Heart left ventricle (tissue), 16 donors: ENCODE measurements at regions of chr5 and their contacts with region 1.

Region 1: GRCh38 chr5:62773460-62773859 is 194.8 kb downstream of the LRRC70 start:
- DNase-seq: no peak
- ATAC-seq: no peak
- H3K4me3 ChIP-seq: no peak overlapping the region
- H3K27ac ChIP-seq: no peak overlapping the region
- H3K4me1 ChIP-seq: peaks cover 0 to under 1% (median 0%) of the 10 kb centered on the region in 12 donors
- H3K27me3 ChIP-seq: no peaks in the 10 kb centered on the region
- CTCF ChIP-seq: no peak
- POLR2A ChIP-seq: no peak

Region 2: GRCh38 chr5:62460578-62460983 is 312.9 kb before region 1 on chr5:
- intact Hi-C with region 1: loop called in 9 of 10 experiments (anchors 2 to 5 kb)
- DNase-seq: no peak
- ATAC-seq: peak in 1 of 4 donors; percentile 49
- H3K4me3 ChIP-seq: no peak overlapping the region
- H3K27ac ChIP-seq: no peak overlapping the region
- H3K4me1 ChIP-seq: peaks cover 0 to 5% (median 0%) of the 10 kb centered on the region in 12 donors
- H3K27me3 ChIP-seq: no peaks in the 10 kb centered on the region
- CTCF ChIP-seq: peak; percentile 63 to 91 (median 77)
- POLR2A ChIP-seq: no peak

Region 3: GRCh38 chr5:62680121-62680520 is 93.3 kb before region 1 on chr5:
- intact Hi-C with region 1: no loop called
- DNase-seq: no peak
- ATAC-seq: no peak
- H3K4me3 ChIP-seq: no peak overlapping the region
- H3K27ac ChIP-seq: no peak overlapping the region
- H3K4me1 ChIP-seq: peaks cover 0 to 11% (median 0%) of the 10 kb centered on the region in 12 donors
- H3K27me3 ChIP-seq: no peaks in the 10 kb centered on the region
- CTCF ChIP-seq: no peak
- POLR2A ChIP-seq: no peak

Region 4: GRCh38 chr5:63211448-63212132 is 438.1 kb after region 1 on chr5:
- intact Hi-C with region 1: no loop called
- DNase-seq: no peak
- ATAC-seq: no peak
- H3K4me3 ChIP-seq: no peak overlapping the region
- H3K27ac ChIP-seq: no peak overlapping the region
- H3K4me1 ChIP-seq: no peaks in the 10 kb centered on the region
- H3K27me3 ChIP-seq: no peaks in the 10 kb centered on the region
- CTCF ChIP-seq: no peak
- POLR2A ChIP-seq: no peak